Left cardiac atrium (tissue), 4 donors: ENCODE measurements at regions of chr11 and their contacts with region 1.

Region 1: DNA sequence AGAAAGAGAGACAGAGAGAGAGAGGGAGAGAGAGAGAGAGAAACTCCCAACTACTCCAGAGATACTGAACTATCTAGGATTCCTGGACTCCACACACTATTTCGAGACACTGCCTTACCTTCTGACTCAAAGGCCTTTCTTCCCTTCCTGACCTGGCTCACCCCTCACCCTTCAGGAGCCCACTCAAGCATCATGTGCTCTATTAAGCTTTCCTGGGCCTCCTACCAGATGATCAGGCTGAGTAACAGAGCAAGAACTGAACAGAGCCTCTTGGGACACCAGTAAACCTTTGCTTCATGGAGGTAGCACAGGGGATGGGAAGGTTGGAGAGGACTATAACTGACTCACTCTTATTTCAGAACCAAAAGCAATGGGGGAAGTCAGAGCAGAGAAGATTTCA is 31.4 kb downstream of the PLEKHA7 start:
- DNase-seq: no peak
- ATAC-seq: no peak

Region 2: GRCh38 chr11:16605894-16606783 is 376.7 kb before region 1 on chr11:
- intact Hi-C with region 1: no loop called
- DNase-seq: peak; percentile 90
- ATAC-seq: peak; percentile 50 to 60

Region 3: GRCh38 chr11:17014838-17015626 is 32.2 kb after region 1 on chr11:
- intact Hi-C with region 1: loop called in 1 of 2 experiments (anchors 1 kb)
- DNase-seq: peak; percentile 23
- ATAC-seq: peak in 1 of 2 donors; percentile 5